Endothelial cell of umbilical vein (primary cell): ENCODE measurements at regions of chr1 and their contacts with region 1.

Region 1: DNA sequence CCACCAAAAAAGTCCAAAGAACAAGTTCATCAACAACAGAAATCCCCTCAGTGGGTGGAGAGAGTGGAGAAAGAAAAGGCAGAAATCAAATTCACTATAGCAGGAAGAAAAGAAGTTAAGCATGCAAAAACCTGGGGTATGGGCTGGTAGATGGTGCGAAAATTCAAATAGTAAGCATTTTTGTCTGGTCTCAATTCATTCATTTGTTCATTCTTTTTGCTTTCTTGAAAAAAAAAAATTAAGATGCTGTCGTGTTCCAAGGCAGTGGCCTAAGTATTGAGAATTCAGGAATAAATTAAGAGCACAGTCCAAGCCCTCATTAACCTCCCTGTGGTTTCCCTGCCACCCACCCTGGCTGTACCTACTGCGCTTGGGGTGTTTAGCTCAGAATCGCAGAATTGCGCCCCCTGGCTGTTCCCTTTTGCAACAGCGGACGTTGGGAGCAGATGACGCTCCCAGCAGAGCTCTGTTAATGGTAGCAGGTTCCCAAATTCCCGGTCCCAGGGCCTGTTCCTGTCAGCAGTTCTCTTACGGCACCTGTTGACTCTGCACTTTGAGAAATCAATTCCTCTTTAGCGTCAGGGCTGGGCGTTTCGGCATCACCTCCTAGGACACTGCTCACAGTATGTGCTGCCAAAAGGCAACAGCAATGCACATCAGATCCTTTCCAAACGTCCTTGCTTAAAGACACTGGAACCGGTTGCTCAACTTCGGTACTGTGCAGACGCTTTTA is 34.0 kb upstream of the SSX2IP start:
- DNase-seq: no peak
- H3K4me3 ChIP-seq: no peak overlapping the region
- H3K27ac ChIP-seq: no peak overlapping the region
- H3K4me1 ChIP-seq: no peaks in the 10 kb centered on the region
- H3K27me3 ChIP-seq: peaks cover 0 to 2% of the 10 kb centered on the region in 2 experiments
- CTCF ChIP-seq: peak; percentile 49 to 50
- POLR2A ChIP-seq: no peak

Region 2: GRCh38 chr1:84668185-84668584 is 56.1 kb before region 1 on chr1:
- CTCF ChIA-PET with region 1: interaction called, 21 read pairs
- POLR2A ChIA-PET with region 1: no interaction called
- dilution Hi-C with region 1: no loop called
- intact Hi-C with region 1: no loop called
- DNase-seq: no peak
- H3K4me3 ChIP-seq: no peak overlapping the region
- H3K27ac ChIP-seq: no peak overlapping the region
- H3K4me1 ChIP-seq: no peaks in the 10 kb centered on the region
- H3K27me3 ChIP-seq: no peaks in the 10 kb centered on the region
- CTCF ChIP-seq: no peak
- POLR2A ChIP-seq: no peak

Region 3: GRCh38 chr1:84690397-84691121 is 33.7 kb before region 1 on chr1 and contains the start of gene SSX2IP:
- CTCF ChIA-PET with region 1: interaction called, 13 read pairs
- POLR2A ChIA-PET with region 1: no interaction called
- dilution Hi-C with region 1: no loop called
- intact Hi-C with region 1: no loop called
- DNase-seq: peak; percentile 95
- H3K4me3 ChIP-seq: peak within 1 kb of the TSS; percentile 45 to 71 (median 49)
- H3K27ac ChIP-seq: no peak within 1 kb of the TSS
- H3K4me1 ChIP-seq: peaks cover 9% of the 10 kb centered on the region
- H3K27me3 ChIP-seq: no peaks in the 10 kb centered on the region
- CTCF ChIP-seq: no peak
- POLR2A ChIP-seq: no peak
- total RNA-seq, gene SSX2IP: 6.9 and 8.4 TPM in 2 replicates

Region 4: DNA sequence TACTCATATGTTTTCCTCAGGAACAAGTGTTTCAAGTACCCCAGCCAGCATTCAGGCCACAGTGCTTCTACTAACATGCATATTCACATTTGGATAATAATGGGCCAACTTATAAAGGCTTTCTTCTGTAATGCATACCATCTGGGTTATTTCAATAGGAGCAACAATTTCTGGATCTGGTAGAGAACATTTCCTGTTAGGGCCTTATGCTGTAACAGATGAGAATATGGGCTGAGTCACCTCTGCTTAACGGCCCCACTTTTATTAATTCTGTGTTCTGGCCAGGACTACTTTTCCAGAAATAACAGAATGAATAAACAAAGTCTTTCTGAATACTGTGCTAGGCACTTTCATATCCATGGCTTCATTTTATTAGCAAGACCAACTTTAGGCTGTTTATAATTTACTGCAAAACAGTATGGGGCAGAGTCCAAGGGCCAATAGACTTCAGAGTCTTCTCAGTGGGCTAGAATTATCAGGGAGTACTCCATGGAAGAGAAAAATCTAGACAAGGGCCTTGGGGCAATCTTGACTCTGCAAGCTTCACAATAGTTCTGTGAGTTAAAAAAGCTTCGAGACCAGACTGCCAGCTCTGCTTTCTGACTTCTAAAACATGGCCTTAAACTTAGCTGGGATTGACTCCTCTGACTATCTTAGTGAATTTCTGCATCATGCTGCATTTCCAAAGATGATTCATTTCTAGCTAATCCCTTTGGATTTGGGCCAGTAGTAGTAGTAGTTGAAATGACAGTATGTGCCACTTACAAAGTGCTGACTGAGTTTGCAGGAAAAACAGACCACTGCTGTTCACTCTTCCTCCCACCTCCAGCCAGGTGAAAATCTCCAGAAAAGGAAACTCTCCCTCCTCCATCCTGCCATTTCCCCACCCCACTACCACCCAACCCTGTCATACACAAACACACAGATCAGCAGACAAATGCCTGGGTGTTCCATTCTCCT is 25.9 kb before region 1 on chr1:
- CTCF ChIA-PET with region 1: interaction called, 11 read pairs
- POLR2A ChIA-PET with region 1: no interaction called
- dilution Hi-C with region 1: no loop called
- intact Hi-C with region 1: no loop called
- DNase-seq: peak; percentile 76
- H3K4me3 ChIP-seq: no peak overlapping the region
- H3K27ac ChIP-seq: peak overlapping the region; percentile 39
- H3K4me1 ChIP-seq: peaks cover 14% of the 10 kb centered on the region
- H3K27me3 ChIP-seq: peaks cover 7 to 9% of the 10 kb centered on the region in 2 experiments
- CTCF ChIP-seq: no peak
- POLR2A ChIP-seq: no peak

Region 5: GRCh38 chr1:84735483-84735882 is 11.2 kb after region 1 on chr1:
- CTCF ChIA-PET with region 1: interaction called, 13 read pairs
- POLR2A ChIA-PET with region 1: no interaction called
- dilution Hi-C with region 1: no loop called
- intact Hi-C with region 1: no loop called
- DNase-seq: no peak
- H3K4me3 ChIP-seq: no peak overlapping the region
- H3K27ac ChIP-seq: no peak overlapping the region
- H3K4me1 ChIP-seq: no peaks in the 10 kb centered on the region
- H3K27me3 ChIP-seq: peaks cover 2 to 14% of the 10 kb centered on the region in 2 experiments
- CTCF ChIP-seq: no peak
- POLR2A ChIP-seq: no peak